ENCODE measurements at regions of chr17 and their contacts with region 1.

Region 1: DNA sequence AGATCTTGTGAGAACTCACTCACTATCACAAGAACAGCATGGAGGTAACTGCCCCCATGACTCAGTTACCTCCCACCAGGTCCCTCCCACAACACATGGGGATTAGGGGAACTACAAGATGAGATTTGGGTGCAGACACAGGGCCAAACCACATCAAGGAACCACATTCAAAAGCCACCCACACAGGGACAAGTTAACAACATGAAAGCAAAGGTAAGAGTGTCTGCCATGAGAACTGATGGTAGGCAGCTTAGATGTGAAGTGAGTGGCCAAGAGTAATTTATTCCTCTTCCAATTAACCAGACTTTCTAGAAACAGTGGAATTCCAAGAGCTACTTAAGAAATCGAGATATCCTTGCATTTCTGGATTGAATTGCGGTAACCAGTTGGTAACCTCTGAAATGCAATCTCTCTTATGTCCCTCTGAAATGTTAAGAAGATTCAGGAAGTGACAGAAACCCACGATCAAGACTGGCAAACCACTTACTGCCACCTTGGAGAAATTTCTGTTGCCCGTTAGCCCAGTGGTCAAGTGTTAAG is 167.4 kb upstream of the CACNG5 start:
- DNase-seq: peak; percentile 89
- H3K4me3 Mint-ChIP-seq: peak overlapping the region; percentile 73
- H3K27ac Mint-ChIP-seq: peak overlapping the region; percentile 91
- H3K4me1 Mint-ChIP-seq: peaks cover 71% of the 10 kb centered on the region
- H3K27me3 Mint-ChIP-seq: peaks cover 2% of the 10 kb centered on the region

Region 2: GRCh38 chr17:66492561-66493005 is 175.0 kb before region 1 on chr17:
- intact Hi-C with region 1: no loop called
- DNase-seq: no peak
- H3K4me3 Mint-ChIP-seq: no peak overlapping the region
- H3K27ac Mint-ChIP-seq: peak overlapping the region; percentile 48
- H3K4me1 Mint-ChIP-seq: peaks cover 48% of the 10 kb centered on the region
- H3K27me3 Mint-ChIP-seq: no peaks in the 10 kb centered on the region

Region 3: GRCh38 chr17:66514227-66514806 is 153.2 kb before region 1 on chr17:
- intact Hi-C with region 1: loop called (anchors 5 kb)
- DNase-seq: no peak
- H3K4me3 Mint-ChIP-seq: no peak overlapping the region
- H3K27ac Mint-ChIP-seq: peak overlapping the region; percentile 42
- H3K4me1 Mint-ChIP-seq: peaks cover 68% of the 10 kb centered on the region
- H3K27me3 Mint-ChIP-seq: no peaks in the 10 kb centered on the region

Region 4: GRCh38 chr17:66549731-66550207 is 117.8 kb before region 1 on chr17:
- intact Hi-C with region 1: loop called (anchors 5 kb)
- DNase-seq: no peak
- H3K4me3 Mint-ChIP-seq: no peak overlapping the region
- H3K27ac Mint-ChIP-seq: no peak overlapping the region
- H3K4me1 Mint-ChIP-seq: peaks cover 45% of the 10 kb centered on the region
- H3K27me3 Mint-ChIP-seq: no peaks in the 10 kb centered on the region

Region 5: DNA sequence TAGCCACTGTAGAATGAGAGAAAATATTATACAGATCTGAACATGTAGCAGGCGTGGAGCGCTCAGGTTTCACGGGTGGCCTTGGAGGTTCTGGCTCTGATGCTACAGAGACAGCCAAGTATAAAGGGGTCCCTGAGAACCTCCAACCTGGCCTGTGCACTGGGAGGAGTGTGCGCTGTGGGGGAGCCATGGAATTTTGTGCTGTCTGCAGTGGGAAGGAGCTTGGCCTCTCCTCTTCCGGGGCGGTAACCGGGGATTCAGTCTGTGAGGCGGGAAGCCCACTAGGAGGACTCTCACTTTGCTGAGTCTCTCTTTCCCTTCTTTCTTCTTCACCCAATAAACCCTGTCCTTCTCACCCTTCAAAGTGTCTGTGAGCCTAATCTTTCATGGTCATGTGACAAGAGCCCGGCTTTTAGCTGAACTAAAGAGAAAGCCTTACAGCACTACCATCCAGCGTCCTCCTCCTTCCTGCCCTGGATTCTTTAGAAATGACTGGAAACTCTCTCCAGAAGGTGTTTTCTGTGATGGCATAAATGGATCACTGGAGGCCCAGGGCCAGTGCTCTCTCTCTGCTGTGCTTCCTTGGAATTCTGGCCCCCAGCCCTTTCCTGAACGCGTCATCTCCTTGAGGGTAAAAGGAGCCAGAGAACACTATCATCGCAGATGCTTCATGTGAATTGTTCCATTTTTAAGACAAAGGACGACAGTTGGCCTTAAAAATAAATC is 64.7 kb before region 1 on chr17:
- intact Hi-C with region 1: no loop called
- DNase-seq: no peak
- H3K4me3 Mint-ChIP-seq: no peak overlapping the region
- H3K27ac Mint-ChIP-seq: no peak overlapping the region
- H3K4me1 Mint-ChIP-seq: peaks cover 2% of the 10 kb centered on the region
- H3K27me3 Mint-ChIP-seq: no peaks in the 10 kb centered on the region

Region 6: DNA sequence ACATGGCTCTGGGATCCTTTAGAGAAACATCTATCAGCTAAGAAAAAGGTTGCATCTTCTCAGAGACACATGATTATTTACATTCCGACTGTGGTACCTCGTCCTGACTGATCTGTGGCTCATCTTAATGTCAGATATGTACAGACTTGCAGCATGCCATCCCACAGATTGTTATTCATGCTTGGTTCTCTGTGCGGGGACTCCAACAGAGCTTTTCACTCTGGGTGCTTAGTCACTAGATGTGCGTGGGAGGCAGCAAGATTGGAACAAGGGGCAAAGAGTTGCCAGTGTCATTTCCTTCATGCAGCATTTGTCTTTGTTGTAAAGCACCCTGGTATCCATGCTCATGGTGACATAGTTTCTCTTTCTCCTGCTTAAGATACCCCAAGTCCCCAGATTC is 11.7 kb before region 1 on chr17:
- intact Hi-C with region 1: loop called (anchors 1 kb)
- DNase-seq: peak; percentile 67
- H3K4me3 Mint-ChIP-seq: peak overlapping the region; percentile 9
- H3K27ac Mint-ChIP-seq: peak overlapping the region; percentile 80
- H3K4me1 Mint-ChIP-seq: peaks cover 48% of the 10 kb centered on the region
- H3K27me3 Mint-ChIP-seq: no peaks in the 10 kb centered on the region

Region 7: GRCh38 chr17:66737524-66737923 is 70.0 kb after region 1 on chr17:
- intact Hi-C with region 1: no loop called
- DNase-seq: no peak
- H3K4me3 Mint-ChIP-seq: no peak overlapping the region
- H3K27ac Mint-ChIP-seq: no peak overlapping the region
- H3K4me1 Mint-ChIP-seq: peaks cover 3% of the 10 kb centered on the region
- H3K27me3 Mint-ChIP-seq: no peaks in the 10 kb centered on the region

Measured in activated CD4-positive, alpha-beta T cell treated with anti-CD3 and anti-CD28 coated beads, Interleukin-2, amount 10 ng/mL, durations not matched to agents 24 days and 14 days (primary cell).